GM12878 (cell line): ENCODE measurements at regions of chr5 and their contacts with region 1.

Region 1: GRCh38 chr5:6961837-6962635 is 248.8 kb downstream of the TENT4A start:
- DNase-seq: no peak
- ATAC-seq: no peak
- H3K4me3 ChIP-seq: no peak overlapping the region
- H3K27ac ChIP-seq: no peak overlapping the region
- H3K4me1 ChIP-seq: no peaks in the 10 kb centered on the region
- H3K27me3 ChIP-seq: no peaks in the 10 kb centered on the region
- CTCF ChIP-seq: no peak
- EP300 ChIP-seq: no peak
- POLR2A ChIP-seq: no peak
- RAD21 ChIP-seq: no peak

Region 2: GRCh38 chr5:6820851-6821479 is 141.1 kb before region 1 on chr5:
- CTCF ChIA-PET with region 1: no interaction called
- POLR2A ChIA-PET with region 1: no interaction called
- RAD21 ChIA-PET with region 1: no interaction called
- SMC1A ChIA-PET with region 1: no interaction called
- in situ Hi-C with region 1: no loop called
- intact Hi-C with region 1: no loop called
- DNase-seq: no peak
- ATAC-seq: peak; percentile 83
- H3K4me3 ChIP-seq: no peak overlapping the region
- H3K27ac ChIP-seq: no peak overlapping the region
- H3K4me1 ChIP-seq: no peaks in the 10 kb centered on the region
- H3K27me3 ChIP-seq: no peaks in the 10 kb centered on the region
- CTCF ChIP-seq: peak; percentile 53 to 77 (median 68)
- EP300 ChIP-seq: no peak
- POLR2A ChIP-seq: no peak
- RAD21 ChIP-seq: peak; percentile 60

Region 3: DNA sequence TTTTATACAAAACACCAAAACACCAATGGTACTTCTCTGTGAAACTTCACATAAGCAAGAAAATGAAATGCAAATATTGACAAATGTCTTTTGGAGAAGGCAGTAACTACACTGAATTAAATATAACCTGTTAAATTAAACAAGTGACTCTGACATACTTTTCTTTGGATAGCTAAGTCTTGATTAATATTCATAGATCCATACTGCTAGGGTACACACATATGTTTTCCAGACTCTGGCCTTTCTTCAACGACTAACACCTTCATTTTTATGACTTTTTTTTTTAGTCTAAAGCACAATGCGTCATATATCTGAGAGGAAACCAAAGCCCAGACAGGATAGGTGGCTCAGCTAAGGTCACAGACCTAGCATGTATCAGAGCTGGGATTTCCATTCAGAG is 14.9 kb after region 1 on chr5:
- CTCF ChIA-PET with region 1: no interaction called
- POLR2A ChIA-PET with region 1: no interaction called
- RAD21 ChIA-PET with region 1: no interaction called
- SMC1A ChIA-PET with region 1: no interaction called
- in situ Hi-C with region 1: no loop called
- intact Hi-C with region 1: loop called (anchors 1 kb)
- DNase-seq: no peak
- ATAC-seq: no peak
- H3K4me3 ChIP-seq: no peak overlapping the region
- H3K27ac ChIP-seq: no peak overlapping the region
- H3K4me1 ChIP-seq: no peaks in the 10 kb centered on the region
- H3K27me3 ChIP-seq: no peaks in the 10 kb centered on the region
- CTCF ChIP-seq: no peak
- EP300 ChIP-seq: no peak
- POLR2A ChIP-seq: no peak
- RAD21 ChIP-seq: no peak

Region 4: DNA sequence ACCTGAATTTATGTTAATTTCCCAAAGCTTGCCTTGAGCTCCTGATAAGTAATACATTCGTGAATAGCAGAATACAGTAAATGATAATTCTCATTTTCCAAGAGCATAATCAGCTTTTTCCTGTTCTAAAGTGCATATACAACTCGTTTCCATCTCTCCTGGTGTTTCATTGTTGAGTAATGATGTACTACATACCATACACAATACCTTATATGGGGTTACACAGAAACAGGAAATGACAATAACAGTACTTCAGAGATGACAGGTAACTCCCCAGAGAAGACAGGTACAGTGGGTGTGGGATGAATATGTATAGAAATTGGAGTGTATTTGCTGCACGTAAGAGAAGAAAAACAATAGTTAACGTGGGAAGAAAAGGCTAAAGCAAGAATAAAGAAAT is 38.3 kb after region 1 on chr5:
- CTCF ChIA-PET with region 1: no interaction called
- POLR2A ChIA-PET with region 1: no interaction called
- RAD21 ChIA-PET with region 1: no interaction called
- SMC1A ChIA-PET with region 1: no interaction called
- in situ Hi-C with region 1: no loop called
- intact Hi-C with region 1: no loop called
- DNase-seq: no peak
- ATAC-seq: no peak
- H3K4me3 ChIP-seq: no peak overlapping the region
- H3K27ac ChIP-seq: no peak overlapping the region
- H3K4me1 ChIP-seq: no peaks in the 10 kb centered on the region
- H3K27me3 ChIP-seq: no peaks in the 10 kb centered on the region
- CTCF ChIP-seq: no peak
- EP300 ChIP-seq: no peak
- POLR2A ChIP-seq: no peak
- RAD21 ChIP-seq: no peak